GM23248 (cell line): ENCODE measurements at regions of chr1 and their contacts with region 1.

Region 1: DNA sequence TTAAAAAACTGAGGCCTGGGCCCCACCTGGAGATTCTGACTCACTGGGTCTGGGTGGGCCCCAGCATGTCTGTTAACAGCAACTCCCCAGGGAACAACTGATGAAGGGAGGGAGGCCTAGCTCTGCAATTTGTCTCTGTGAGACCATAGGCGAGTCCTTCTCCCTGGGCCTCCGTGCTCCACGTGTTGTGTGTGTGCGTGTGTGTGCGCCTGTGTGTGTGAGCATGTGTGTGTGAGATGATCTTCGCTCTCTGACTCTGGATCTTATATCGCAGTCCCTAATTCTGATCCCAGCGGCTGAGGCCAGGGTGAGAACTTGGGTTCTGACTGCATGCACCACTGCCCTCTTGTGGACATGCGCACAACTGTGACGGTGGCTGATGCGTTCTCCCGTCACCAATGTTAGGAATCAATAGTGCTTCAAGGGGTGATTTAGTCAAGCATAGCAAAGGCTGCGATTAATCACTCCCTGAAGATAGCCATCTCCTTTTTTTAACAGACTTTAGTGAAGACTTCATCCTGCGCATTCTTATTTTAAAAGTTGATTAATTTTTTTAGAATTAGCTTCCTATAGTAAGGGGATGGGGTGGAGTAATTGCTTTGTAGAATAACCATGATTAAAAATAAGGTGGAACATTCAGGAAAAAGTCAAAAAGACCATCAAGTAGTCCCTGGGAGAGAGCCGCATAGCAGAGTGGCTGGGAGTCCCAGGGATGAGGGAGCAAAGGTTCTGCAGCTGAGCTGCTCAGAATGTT is 62.4 kb upstream of the USP24 start:
- DNase-seq: peak; percentile 89
- H3K4me3 ChIP-seq: no peak overlapping the region
- H3K27ac ChIP-seq: no peak overlapping the region
- H3K4me1 ChIP-seq: peaks cover 22% of the 10 kb centered on the region
- H3K27me3 ChIP-seq: no peaks in the 10 kb centered on the region

Region 2: DNA sequence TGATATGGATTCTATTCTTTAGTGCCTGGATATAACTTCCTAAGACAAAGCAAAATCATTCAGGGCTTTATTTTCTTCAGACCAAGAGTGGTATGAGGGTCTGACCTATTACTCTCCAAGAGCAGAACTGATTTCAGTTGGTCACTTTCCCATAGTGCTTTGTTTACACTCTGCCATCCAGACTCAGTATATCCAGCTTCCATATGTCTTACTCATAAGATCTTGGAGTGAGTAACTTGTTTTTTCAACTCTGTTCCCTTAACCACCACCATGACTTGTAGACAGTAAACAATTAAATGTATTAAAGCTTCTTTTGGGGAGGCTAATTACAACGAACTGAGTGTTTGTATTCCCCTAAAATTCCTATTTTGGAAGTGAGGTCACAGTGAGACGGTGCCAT is 145.8 kb before region 1 on chr1:
- in situ Hi-C with region 1: loop called (anchors 5 kb)
- DNase-seq: peak; percentile 59
- H3K4me3 ChIP-seq: no peak overlapping the region
- H3K27ac ChIP-seq: peak overlapping the region; percentile 62
- H3K4me1 ChIP-seq: peaks cover 24% of the 10 kb centered on the region
- H3K27me3 ChIP-seq: no peaks in the 10 kb centered on the region

Region 3: DNA sequence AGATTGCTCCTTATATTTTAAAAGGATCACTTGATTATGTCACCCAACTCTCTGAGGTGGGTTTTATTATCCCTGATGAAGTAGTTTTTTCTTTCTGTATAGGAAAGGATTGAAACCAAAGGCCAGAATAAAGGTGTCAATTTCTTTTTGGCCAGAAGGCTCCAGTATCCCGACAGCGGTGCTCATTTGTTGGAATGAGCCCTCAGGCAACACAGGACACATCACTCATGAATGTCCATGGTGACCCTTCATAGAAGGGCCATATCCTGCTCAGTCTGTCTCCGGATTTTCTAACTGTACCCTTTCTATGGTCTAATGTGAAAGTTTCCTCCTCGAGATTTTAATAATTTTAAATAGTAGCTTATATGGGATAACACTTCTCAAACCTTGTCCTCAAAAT is 108.9 kb after region 1 on chr1:
- in situ Hi-C with region 1: no loop called
- DNase-seq: no peak
- H3K4me3 ChIP-seq: no peak overlapping the region
- H3K27ac ChIP-seq: no peak overlapping the region
- H3K4me1 ChIP-seq: no peaks in the 10 kb centered on the region
- H3K27me3 ChIP-seq: no peaks in the 10 kb centered on the region

Region 4: DNA sequence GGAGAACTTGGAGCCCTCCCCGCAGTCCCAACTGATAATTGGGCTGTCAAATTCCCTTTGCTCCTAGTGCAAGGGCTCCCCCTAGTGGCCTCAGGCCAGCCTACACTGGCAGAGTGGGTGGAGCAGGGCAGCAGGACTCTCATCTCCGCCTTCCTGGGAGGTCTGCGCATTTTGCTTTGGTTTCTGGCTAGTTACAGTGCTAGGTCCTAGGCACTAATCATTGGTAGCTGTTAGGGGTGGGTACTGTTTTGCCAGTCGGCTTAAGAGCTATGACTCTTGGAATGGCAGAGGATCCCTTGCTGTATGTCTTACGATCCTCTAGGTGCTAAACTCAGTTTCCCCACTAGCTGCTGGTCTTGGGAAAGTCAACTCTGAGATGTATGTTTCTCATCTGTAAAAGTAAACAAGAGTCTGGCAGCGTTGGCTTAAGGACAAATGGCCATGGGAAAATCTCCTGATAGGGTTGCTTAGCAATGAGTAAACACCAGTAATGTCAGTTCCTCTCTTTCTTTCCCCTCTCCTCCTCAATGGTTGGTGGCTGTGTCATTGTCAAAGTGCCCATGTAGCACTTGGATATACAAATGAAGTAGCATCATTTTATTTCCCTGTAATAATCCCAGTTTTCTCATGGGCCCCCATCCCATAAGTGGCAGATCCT is 1543.7 kb after region 1 on chr1:
- in situ Hi-C with region 1: loop called (anchors 25 kb)
- DNase-seq: peak; percentile 86
- H3K4me3 ChIP-seq: no peak overlapping the region
- H3K27ac ChIP-seq: no peak overlapping the region
- H3K4me1 ChIP-seq: no peaks in the 10 kb centered on the region
- H3K27me3 ChIP-seq: no peaks in the 10 kb centered on the region